B cell (primary cell): ENCODE measurements at regions of chr16 and their contacts with region 1.

Region 1: DNA sequence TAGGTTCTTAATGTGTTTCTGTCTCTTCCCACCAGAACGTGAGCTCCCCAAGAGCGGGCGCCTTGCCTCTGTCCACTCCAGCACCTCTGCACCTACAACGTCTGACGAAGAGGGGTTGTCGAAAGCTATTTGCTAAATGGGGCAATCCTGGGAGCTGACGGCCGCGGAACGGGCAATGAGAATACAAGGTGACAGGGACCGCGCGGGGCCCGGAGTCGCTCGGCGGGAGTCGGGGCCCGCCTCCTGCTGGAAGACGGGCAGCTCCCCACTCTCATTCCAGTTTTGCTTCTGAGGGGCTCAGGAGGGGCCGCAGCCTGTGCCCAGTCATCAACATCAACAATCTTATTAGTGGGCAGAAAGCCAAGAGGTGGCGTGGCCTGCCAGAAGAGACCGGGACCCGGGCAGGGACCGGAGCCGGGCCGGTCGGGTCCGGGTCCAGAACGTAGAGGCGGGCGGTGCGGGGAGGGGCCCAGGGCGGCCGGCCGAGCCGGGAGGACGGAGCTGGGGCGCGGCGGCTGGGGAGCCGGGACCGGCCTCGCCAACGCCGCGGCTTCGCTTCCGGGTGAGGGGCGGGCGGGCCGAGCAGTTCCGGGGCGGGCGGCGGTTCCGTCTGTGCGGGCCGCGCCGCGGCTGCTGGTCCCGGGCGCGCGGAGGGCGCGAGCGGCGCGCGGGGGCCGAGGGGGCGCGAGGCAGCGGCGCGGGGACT is at the start of gene MOSMO:
- DNase-seq: peak; percentile 79
- ATAC-seq: peak; percentile 89
- H3K4me3 ChIP-seq: peak within 1 kb of the TSS; percentile 55 to 97 (median 89)
- H3K4me3 Mint-ChIP-seq: peak within 1 kb of the TSS; percentile 93
- H3K27ac ChIP-seq: peak within 1 kb of the TSS; percentile 60 to 82
- H3K27ac Mint-ChIP-seq: peak within 1 kb of the TSS; percentile 88
- H3K4me1 ChIP-seq: peaks cover 17 to 22% of the 10 kb centered on the region in 2 donors
- H3K4me1 Mint-ChIP-seq: peaks cover 30% of the 10 kb centered on the region
- H3K27me3 ChIP-seq: no peaks in the 10 kb centered on the region
- H3K27me3 Mint-ChIP-seq: no peaks in the 10 kb centered on the region
- CTCF ChIP-seq: no peak
- total RNA-seq, gene MOSMO: 18.6 and 20.2 TPM in 2 replicates

Region 2: DNA sequence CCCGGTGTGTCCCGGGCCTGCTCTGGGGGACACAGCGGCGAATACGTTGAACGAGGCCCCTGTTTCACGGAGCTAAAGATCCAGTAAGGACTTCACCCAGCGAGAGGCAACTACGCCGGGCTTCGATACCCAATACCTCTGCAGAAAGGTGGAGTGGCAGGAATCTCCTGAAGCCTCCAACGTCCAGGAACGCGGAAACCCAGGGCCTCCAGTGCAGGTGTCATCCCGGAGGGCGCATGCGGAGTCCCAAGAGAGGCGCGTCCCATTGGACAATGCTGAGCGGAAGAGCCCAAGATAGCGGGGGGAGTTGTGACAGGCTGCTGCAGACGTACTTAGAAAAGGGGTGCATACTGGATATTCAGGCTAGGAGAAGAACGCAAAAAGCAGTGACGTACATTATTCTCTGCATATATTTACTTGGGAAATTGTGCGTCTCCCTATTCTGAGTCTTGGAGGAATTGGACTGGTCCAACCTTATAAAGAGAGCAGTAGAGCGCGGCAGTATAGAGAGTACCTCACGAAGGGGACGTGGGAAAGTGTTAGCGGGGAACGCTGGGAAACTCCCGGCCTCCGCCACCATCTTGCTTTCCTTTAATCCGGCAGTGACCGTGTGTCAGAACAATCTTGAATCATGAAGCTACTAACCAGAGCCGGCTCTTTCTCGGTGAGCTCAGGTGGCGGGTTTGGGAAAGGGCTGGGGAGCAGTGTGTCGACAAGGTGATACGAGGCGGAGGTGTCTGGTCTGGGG is 54.7 kb before region 1 on chr16 and contains the start of gene UQCRC2:
- CTCF ChIA-PET with region 1: interaction called, 6 read pairs
- POLR2A ChIA-PET with region 1: no interaction called
- intact Hi-C with region 1: loop called (anchors 2 kb)
- DNase-seq: peak; percentile 96
- ATAC-seq: peak; percentile 91
- H3K4me3 ChIP-seq: peak within 1 kb of the TSS; percentile 74 to 100 (median 97)
- H3K4me3 Mint-ChIP-seq: peak within 1 kb of the TSS; percentile 98
- H3K27ac ChIP-seq: peak within 1 kb of the TSS; percentile 88 to 97
- H3K27ac Mint-ChIP-seq: peak within 1 kb of the TSS; percentile 97
- H3K4me1 ChIP-seq: peaks cover 34 to 45% of the 10 kb centered on the region in 2 donors
- H3K4me1 Mint-ChIP-seq: peaks cover 65% of the 10 kb centered on the region
- H3K27me3 ChIP-seq: no peaks in the 10 kb centered on the region
- H3K27me3 Mint-ChIP-seq: no peaks in the 10 kb centered on the region
- CTCF ChIP-seq: no peak
- total RNA-seq, gene UQCRC2: 150 and 155 TPM in 2 replicates

Region 3: DNA sequence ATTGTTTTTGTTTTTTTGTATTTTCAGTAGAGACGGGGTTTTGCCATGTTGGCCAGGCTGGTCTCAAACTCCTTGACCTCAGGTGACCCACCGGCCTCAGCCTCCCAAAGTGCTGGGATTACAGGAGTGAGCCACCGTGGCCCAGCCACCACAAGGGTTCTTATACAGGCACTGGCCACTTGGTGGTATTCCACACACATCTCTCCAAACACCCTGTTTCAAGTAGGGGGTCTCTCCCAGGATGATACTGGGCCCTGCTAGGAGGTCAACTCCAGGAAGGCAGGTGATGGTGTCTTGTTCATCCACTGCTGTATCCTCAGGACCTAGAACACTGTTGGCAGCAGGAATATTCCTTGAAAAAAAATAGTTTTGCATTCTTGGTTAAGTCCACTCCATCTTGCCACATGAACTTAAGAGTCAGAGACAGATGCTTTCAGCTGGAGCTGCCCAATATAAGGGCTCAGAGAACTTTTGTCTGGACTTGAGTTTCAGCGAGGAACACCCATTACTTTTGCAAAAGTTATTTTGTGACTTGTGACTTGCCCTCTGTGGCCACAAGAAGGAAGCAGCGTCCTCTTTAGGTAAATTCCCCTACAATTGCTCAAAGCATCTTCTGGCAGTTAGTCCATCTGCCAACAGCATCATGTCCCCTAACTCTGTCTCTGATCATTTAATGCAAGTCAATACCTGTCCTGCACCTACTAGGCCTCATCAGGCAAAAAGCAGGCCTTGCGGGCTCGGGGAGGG is 191.1 kb after region 1 on chr16:
- CTCF ChIA-PET with region 1: no interaction called
- POLR2A ChIA-PET with region 1: no interaction called
- intact Hi-C with region 1: no loop called
- DNase-seq: peak; percentile 43
- ATAC-seq: no peak
- H3K4me3 ChIP-seq: no peak overlapping the region
- H3K4me3 Mint-ChIP-seq: peak overlapping the region; percentile 52
- H3K27ac ChIP-seq: peak overlapping the region; percentile 23 to 24
- H3K27ac Mint-ChIP-seq: peak overlapping the region; percentile 70
- H3K4me1 ChIP-seq: peaks cover 15 to 32% of the 10 kb centered on the region in 2 donors
- H3K4me1 Mint-ChIP-seq: peaks cover 33% of the 10 kb centered on the region
- H3K27me3 ChIP-seq: no peaks in the 10 kb centered on the region
- H3K27me3 Mint-ChIP-seq: peaks cover 3% of the 10 kb centered on the region
- CTCF ChIP-seq: no peak